CD4-positive, alpha-beta T cell (primary cell): ENCODE measurements at regions of chr16 and their contacts with region 1.

Region 1: GRCh38 chr16:3282730-3283524 is at the start of gene ZNF263:
- DNase-seq: peak; percentile 85 to 98 (median 90)
- ATAC-seq: peak; percentile 89
- H3K4me3 ChIP-seq: peak within 1 kb of the TSS; percentile 93
- H3K4me3 Mint-ChIP-seq: peak within 1 kb of the TSS; percentile 96
- H3K27ac ChIP-seq: peak within 1 kb of the TSS; percentile 89 to 100
- H3K27ac Mint-ChIP-seq: peak within 1 kb of the TSS; percentile 94
- H3K4me1 ChIP-seq: peaks cover 39% of the 10 kb centered on the region
- H3K4me1 Mint-ChIP-seq: peaks cover 42% of the 10 kb centered on the region
- H3K27me3 ChIP-seq: no peaks in the 10 kb centered on the region
- H3K27me3 Mint-ChIP-seq: no peaks in the 10 kb centered on the region
- CTCF ChIP-seq: no peak
- total RNA-seq, gene ZNF263: 35.3 to 39.4 TPM

Region 2: DNA sequence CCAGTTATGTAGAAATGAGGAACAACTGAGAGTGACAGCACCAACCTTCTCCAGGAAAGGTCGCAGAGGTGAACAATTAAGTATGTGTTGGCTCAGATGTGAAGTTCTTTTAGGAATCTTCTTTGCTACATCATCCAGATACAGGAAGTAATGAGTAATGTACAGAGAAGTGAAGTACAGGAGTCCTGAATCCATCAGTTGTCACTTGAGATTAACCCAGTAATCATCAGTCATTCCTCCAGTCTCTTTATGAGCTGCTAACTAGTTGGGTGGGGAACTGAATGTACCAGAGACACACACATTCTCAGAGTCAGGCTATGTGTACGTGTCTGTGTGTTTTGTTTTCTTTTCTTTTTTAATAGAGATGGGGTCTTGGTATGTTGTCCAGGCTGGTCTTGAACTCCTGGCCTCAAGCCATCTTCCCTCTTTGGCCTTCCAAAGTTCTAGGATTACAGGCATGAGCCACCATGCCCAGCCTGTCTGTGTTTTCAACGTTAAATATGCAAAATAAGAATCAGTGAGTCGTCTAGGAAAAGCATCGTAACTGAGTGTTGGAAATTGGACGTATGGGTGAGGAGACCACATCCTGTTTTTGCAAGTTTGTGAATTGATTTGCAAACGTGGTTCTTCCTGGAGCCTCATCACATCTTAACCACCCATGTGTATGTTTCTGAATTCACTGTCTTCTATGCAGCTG is 67.9 kb before region 1 on chr16:
- CTCF ChIA-PET with region 1: no interaction called
- POLR2A ChIA-PET with region 1: interaction called, 4 read pairs
- intact Hi-C with region 1: loop called in 1 of 2 experiments (anchors 5 kb)
- DNase-seq: peak in 7 of 14 experiments; percentile 30 to 89 (median 43)
- ATAC-seq: peak; percentile 86
- H3K4me3 ChIP-seq: no peak overlapping the region
- H3K4me3 Mint-ChIP-seq: peak overlapping the region; percentile 71
- H3K27ac ChIP-seq: peak overlapping the region; percentile 48 to 79
- H3K27ac Mint-ChIP-seq: peak overlapping the region; percentile 96
- H3K4me1 ChIP-seq: peaks cover 48% of the 10 kb centered on the region
- H3K4me1 Mint-ChIP-seq: peaks cover 39% of the 10 kb centered on the region
- H3K27me3 ChIP-seq: no peaks in the 10 kb centered on the region
- H3K27me3 Mint-ChIP-seq: no peaks in the 10 kb centered on the region
- CTCF ChIP-seq: no peak

Region 3: GRCh38 chr16:3305109-3306068 is 22.5 kb after region 1 on chr16 and contains the starts of genes TIGD7 and ZNF75A:
- CTCF ChIA-PET with region 1: no interaction called
- POLR2A ChIA-PET with region 1: interaction called, 48 read pairs
- intact Hi-C with region 1: loop called (anchors 1 kb)
- DNase-seq: peak; percentile 67 to 96 (median 79)
- ATAC-seq: peak; percentile 92
- H3K4me3 ChIP-seq: peak within 1 kb of the TSS; percentile 91
- H3K4me3 Mint-ChIP-seq: peak within 1 kb of the TSS; percentile 86
- H3K27ac ChIP-seq: peak within 1 kb of the TSS; percentile 76 to 89
- H3K27ac Mint-ChIP-seq: peak within 1 kb of the TSS; percentile 82
- H3K4me1 ChIP-seq: peaks cover 28% of the 10 kb centered on the region
- H3K4me1 Mint-ChIP-seq: peaks cover 22% of the 10 kb centered on the region
- H3K27me3 ChIP-seq: no peaks in the 10 kb centered on the region
- H3K27me3 Mint-ChIP-seq: no peaks in the 10 kb centered on the region
- CTCF ChIP-seq: no peak
- total RNA-seq, gene TIGD7: 1.5 to 1.7 TPM
- total RNA-seq, gene ZNF75A: 41.7 to 42.2 TPM

Region 4: DNA sequence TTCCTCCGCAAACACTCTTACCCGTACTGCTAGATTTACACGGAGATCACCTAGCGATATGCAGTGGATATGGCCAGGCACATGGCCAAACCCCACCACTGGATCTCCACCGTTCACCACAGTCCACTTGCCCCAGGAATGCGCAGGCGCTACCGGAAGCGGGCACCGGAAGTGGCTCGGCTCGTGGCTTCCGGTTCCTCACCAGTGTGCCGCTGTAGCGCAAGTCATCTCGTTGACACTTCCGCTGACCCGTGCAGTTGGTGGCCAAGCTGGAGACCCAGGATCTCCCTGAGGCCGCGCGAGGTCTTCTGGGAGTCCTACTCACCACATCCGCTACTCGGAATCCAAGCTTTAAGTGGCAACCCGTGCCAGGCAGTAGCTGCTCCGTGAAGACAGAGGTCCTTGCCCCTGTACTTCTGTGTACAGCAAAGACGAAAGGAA is 148.9 kb after region 1 on chr16:
- CTCF ChIA-PET with region 1: no interaction called
- POLR2A ChIA-PET with region 1: interaction called, 10 read pairs
- intact Hi-C with region 1: no loop called
- DNase-seq: peak in 12 of 14 experiments; percentile 11 to 74 (median 40)
- ATAC-seq: peak; percentile 74
- H3K4me3 ChIP-seq: peak overlapping the region; percentile 8
- H3K4me3 Mint-ChIP-seq: peak overlapping the region; percentile 74
- H3K27ac ChIP-seq: no peak overlapping the region
- H3K27ac Mint-ChIP-seq: peak overlapping the region; percentile 75
- H3K4me1 ChIP-seq: peaks cover 8% of the 10 kb centered on the region
- H3K4me1 Mint-ChIP-seq: peaks cover 30% of the 10 kb centered on the region
- H3K27me3 ChIP-seq: no peaks in the 10 kb centered on the region
- H3K27me3 Mint-ChIP-seq: peaks cover 3% of the 10 kb centered on the region
- CTCF ChIP-seq: no peak

Region 5: GRCh38 chr16:3503523-3503922 is 220.6 kb after region 1 on chr16:
- CTCF ChIA-PET with region 1: no interaction called
- POLR2A ChIA-PET with region 1: interaction called, 14 read pairs
- intact Hi-C with region 1: no loop called
- DNase-seq: peak; percentile 23 to 89 (median 62)
- ATAC-seq: peak; percentile 55
- H3K4me3 ChIP-seq: peak overlapping the region; percentile 25
- H3K4me3 Mint-ChIP-seq: peak overlapping the region; percentile 83
- H3K27ac ChIP-seq: peak overlapping the region; percentile 42 to 66
- H3K27ac Mint-ChIP-seq: peak overlapping the region; percentile 95
- H3K4me1 ChIP-seq: peaks cover 60% of the 10 kb centered on the region
- H3K4me1 Mint-ChIP-seq: peaks cover 72% of the 10 kb centered on the region
- H3K27me3 ChIP-seq: no peaks in the 10 kb centered on the region
- H3K27me3 Mint-ChIP-seq: no peaks in the 10 kb centered on the region
- CTCF ChIP-seq: no peak